OCI-LY7 (cell line): ENCODE measurements at regions of chr2 and their contacts with region 1.

Region 1: GRCh38 chr2:31909661-31910060 is 101.1 kb downstream of the MEMO1 start:
- DNase-seq: no peak
- H3K4me3 ChIP-seq: no peak overlapping the region
- H3K27ac ChIP-seq: no peak overlapping the region
- H3K4me1 ChIP-seq: peaks cover 6% of the 10 kb centered on the region
- CTCF ChIP-seq: no peak

Region 2: DNA sequence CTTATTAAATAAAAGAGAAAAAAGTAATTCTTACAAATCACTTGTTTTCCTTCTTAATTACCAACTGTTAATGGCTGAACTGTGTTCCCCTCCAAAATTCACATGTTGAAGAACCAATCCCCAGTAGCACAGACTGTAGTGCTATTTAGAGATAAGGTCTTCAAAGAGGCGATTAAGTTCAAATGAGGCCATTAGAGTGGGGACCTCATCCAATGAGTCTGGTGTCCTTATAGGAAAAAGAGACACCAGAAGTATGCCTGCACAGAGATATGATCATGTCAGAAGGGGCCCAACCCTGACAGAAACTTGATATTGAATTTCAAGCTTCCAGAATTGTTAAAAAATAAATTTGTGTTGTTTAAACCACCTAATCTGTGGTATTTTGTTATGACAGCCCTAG is 11.3 kb after region 1 on chr2:
- CTCF ChIA-PET with region 1: no interaction called
- POLR2A ChIA-PET with region 1: interaction called, 10 read pairs
- intact Hi-C with region 1: no loop called
- DNase-seq: no peak
- H3K4me3 ChIP-seq: no peak overlapping the region
- H3K27ac ChIP-seq: no peak overlapping the region
- H3K4me1 ChIP-seq: peaks cover 7% of the 10 kb centered on the region
- CTCF ChIP-seq: no peak

Region 3: GRCh38 chr2:32108111-32108510 is 198.4 kb after region 1 on chr2:
- CTCF ChIA-PET with region 1: no interaction called
- POLR2A ChIA-PET with region 1: no interaction called
- intact Hi-C with region 1: no loop called
- DNase-seq: no peak
- H3K4me3 ChIP-seq: no peak overlapping the region
- H3K27ac ChIP-seq: no peak overlapping the region
- H3K4me1 ChIP-seq: no peaks in the 10 kb centered on the region
- CTCF ChIP-seq: no peak

Region 4: GRCh38 chr2:32402091-32402490 is 492.4 kb after region 1 on chr2:
- CTCF ChIA-PET with region 1: no interaction called
- POLR2A ChIA-PET with region 1: no interaction called
- intact Hi-C with region 1: no loop called
- DNase-seq: no peak
- H3K4me3 ChIP-seq: no peak overlapping the region
- H3K27ac ChIP-seq: no peak overlapping the region
- H3K4me1 ChIP-seq: no peaks in the 10 kb centered on the region
- CTCF ChIP-seq: no peak